ENCODE measurements at regions of chr1 and their contacts with region 1.

Region 1: DNA sequence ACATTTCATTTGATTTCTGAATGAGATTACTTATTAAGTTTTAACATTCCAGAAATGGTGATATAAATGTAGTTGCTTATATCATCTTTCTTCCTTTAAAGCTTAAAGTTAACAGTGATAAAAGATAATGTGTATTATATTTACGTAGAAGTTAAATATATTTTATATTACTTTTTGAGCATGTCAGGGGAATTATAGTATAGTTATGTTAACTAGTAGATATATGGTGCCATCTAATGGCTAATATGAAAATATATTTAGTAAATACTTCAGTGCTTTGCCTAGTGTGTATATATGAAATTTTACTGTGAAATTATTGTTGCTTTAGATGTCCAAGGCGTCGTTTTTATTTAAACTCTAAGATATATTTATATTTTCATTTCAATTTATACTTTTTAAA is 51.5 kb downstream of the SYT14 start:
- DNase-seq: no peak
- H3K4me3 ChIP-seq: no peak overlapping the region
- H3K27ac ChIP-seq: no peak overlapping the region
- H3K4me1 ChIP-seq: no peaks in the 10 kb centered on the region
- H3K27me3 ChIP-seq: no peaks in the 10 kb centered on the region
- CTCF ChIP-seq: no peak
- POLR2A ChIP-seq: no peak

Region 2: GRCh38 chr1:209505044-209505443 is 484.5 kb before region 1 on chr1:
- intact Hi-C with region 1: no loop called
- DNase-seq: no peak
- H3K4me3 ChIP-seq: no peak overlapping the region
- H3K27ac ChIP-seq: no peak overlapping the region
- H3K4me1 ChIP-seq: no peaks in the 10 kb centered on the region
- H3K27me3 ChIP-seq: no peaks in the 10 kb centered on the region
- CTCF ChIP-seq: no peak
- POLR2A ChIP-seq: no peak

Region 3: DNA sequence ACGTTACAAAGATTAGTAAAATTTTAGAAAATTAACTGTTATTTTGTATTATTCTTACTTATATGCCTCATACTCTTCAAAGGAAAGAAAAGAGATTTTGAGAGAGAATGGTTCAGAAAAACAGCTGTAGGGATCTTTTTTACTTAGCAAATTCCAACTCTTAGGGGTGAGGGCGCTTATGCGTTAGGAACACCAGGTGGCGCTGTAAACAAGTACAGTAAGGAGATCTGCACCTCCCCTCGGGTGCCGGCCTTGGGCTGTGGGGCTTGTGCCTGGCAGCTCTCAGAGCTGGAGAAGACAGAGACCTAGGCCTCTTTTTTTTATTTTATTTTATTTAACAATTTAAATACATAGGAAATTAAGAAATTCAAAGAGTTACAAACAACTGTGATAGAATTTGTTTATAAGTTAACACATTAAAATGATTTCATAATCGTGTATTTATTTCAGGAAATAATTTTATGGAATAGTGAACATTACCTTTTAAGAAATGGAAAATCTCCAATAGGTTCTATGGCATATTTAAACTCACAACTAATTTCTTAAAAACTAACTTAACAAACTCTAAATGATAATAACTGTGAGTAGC is 129.1 kb before region 1 on chr1:
- intact Hi-C with region 1: loop called (anchors 5 kb)
- DNase-seq: no peak
- H3K4me3 ChIP-seq: no peak overlapping the region
- H3K27ac ChIP-seq: no peak overlapping the region
- H3K4me1 ChIP-seq: no peaks in the 10 kb centered on the region
- H3K27me3 ChIP-seq: no peaks in the 10 kb centered on the region
- CTCF ChIP-seq: peak; percentile 24 to 86 (median 60)
- POLR2A ChIP-seq: no peak